Endothelial cell of umbilical vein (primary cell): ENCODE measurements at regions of chr9 and their contacts with region 1.

Region 1: DNA sequence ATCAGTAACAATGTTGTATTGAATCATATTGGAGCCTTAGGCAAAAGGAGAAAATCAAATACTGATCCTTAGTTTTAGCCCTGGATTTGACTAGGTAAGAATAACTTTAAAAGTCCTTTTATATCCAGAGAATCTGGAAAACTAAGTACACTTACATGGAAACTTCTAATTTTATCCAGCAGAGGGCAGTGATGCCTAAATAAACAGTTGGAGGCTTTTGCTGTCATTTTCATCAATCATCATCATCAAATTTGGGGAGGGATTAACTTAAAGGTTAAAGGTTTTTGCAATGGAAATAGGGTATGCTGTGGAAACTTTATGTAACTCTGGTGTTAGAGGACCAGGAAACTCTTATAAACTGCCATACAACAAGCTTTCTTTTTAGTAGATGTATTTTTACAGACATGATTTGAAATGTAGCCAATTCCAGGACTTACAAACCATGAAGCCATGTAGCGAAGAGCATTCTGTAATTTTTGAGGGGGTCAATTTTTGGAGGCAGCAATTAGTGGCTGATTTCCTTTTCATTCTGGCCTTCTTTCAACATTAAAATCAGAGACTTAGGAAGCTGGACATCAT is 112.7 kb downstream of the OSTF1 start:
- DNase-seq: peak; percentile 62
- H3K4me3 ChIP-seq: no peak overlapping the region
- H3K27ac ChIP-seq: no peak overlapping the region
- H3K4me1 ChIP-seq: no peaks in the 10 kb centered on the region
- H3K27me3 ChIP-seq: peaks cover 0 to 3% of the 10 kb centered on the region in 2 experiments
- CTCF ChIP-seq: peak in 1 of 2 donors; percentile 37
- POLR2A ChIP-seq: no peak

Region 2: DNA sequence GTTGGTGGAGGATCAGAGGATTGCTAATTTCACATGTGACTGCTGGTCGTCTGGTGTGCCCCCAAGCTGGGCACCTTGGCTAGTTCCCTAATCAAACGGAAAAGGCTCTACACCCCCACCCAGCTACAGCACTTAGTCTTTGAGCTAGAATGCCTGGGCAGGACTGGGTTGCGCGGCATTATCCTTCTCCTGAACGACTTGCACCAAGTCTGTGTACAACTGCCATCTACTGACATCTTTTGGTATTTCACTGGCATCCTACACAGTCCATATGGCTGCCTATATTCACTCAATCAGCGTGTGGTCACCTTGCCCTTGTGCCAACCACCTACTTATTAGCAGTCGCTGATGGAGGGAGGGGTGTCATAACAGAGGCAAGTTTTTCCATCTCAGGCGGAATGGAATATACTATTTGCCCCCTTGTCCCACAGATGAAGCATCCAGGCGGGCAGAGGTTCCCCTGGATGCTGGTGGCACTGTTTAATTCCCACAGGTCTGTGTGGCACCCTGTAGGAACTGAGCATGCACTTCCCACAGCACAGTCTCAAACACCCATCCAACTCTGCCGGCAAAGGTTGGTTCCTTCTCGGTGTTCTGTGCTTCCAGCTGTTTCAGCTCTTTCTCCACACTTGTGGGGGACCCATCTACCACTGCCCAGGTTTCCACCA is 37.5 kb after region 1 on chr9:
- CTCF ChIA-PET with region 1: interaction called, 59 read pairs
- POLR2A ChIA-PET with region 1: no interaction called
- dilution Hi-C with region 1: no loop called
- intact Hi-C with region 1: loop called (anchors 1 kb)
- DNase-seq: peak; percentile 71
- H3K4me3 ChIP-seq: no peak overlapping the region
- H3K27ac ChIP-seq: no peak overlapping the region
- H3K4me1 ChIP-seq: no peaks in the 10 kb centered on the region
- H3K27me3 ChIP-seq: peaks cover 0 to 3% of the 10 kb centered on the region in 2 experiments
- CTCF ChIP-seq: peak; percentile 54 to 57
- POLR2A ChIP-seq: no peak